HepG2 (cell line): ENCODE measurements at regions of chr11 and their contacts with region 1.

Region 1: GRCh38 chr11:66438504-66439466 is at the start of gene MRPL11:
- DNase-seq: peak; percentile 92
- ATAC-seq: peak; percentile 94
- H3K4me3 ChIP-seq: peak within 1 kb of the TSS; percentile 78 to 89 (median 84)
- H3K27ac ChIP-seq: peak within 1 kb of the TSS; percentile 88
- H3K4me1 ChIP-seq: peaks cover 33% of the 10 kb centered on the region
- H3K27me3 ChIP-seq: peaks cover 2 to 9% of the 10 kb centered on the region in 2 experiments; a peak in 2 of 5 replicates
- CTCF ChIP-seq: peak; percentile 90
- EP300 ChIP-seq: no peak
- POLR2A ChIP-seq: peak; percentile 67 to 78; a peak in 3 of 4 replicates
- RAD21 ChIP-seq: no peak
- total RNA-seq, gene MRPL11: 176 and 220 TPM in 2 replicates

Region 2: GRCh38 chr11:66421492-66422205 is 17.1 kb before region 1 on chr11:
- CTCF ChIA-PET with region 1: no interaction called
- POLR2A ChIA-PET with region 1: interaction called, 11 read pairs
- in situ Hi-C with region 1: no loop called
- intact Hi-C with region 1: no loop called
- DNase-seq: peak; percentile 78
- ATAC-seq: peak; percentile 73
- H3K4me3 ChIP-seq: no peak overlapping the region
- H3K27ac ChIP-seq: no peak overlapping the region
- H3K4me1 ChIP-seq: no peaks in the 10 kb centered on the region
- H3K27me3 ChIP-seq: peaks cover 0 to 5% of the 10 kb centered on the region in 2 experiments; a peak in 1 of 5 replicates
- CTCF ChIP-seq: peak; percentile 58
- EP300 ChIP-seq: peak; percentile 48 to 58; a peak in 3 of 4 replicates
- POLR2A ChIP-seq: no peak
- RAD21 ChIP-seq: peak; percentile 96

Region 3: DNA sequence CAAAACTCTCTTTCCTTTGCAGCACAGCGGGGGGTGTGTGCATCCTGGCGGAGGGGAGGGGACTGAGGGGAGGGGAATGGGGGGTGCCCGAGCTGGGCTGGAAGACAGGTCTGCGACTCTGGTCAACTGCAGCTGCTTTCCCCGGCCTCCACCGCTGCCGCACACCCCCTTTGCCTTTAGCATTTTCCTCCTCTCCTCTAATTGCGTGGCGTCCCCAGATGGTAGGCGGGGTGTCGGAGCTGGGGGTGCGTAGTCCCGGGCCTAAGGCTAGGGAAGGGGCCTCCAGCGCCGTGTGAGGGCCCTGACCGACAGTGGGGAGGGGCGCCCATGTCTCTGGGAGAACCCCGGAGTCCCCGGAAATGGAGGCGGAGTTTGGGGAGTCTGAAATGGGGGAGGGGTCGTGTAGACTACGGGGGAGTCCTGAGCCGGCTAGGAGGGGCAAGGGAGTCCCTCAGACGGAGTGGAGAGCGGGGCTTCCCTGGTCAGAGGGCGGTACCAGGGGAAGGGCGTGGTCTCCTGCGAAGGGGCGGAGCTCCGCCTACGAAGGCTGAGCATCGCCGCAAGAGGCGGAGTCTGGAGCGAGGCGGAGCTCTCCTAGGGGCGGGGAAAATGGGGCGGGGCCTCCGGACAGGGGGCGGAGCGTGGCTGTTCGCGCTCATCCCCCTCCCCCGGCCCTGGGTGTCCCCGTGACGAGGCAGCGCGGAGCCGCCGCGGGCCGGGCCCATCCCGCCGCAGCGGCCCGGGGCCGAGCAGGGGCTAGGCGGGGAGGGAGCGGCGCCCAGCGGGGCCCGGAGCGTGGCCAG is 27.6 kb after region 1 on chr11 and contains the start of gene PELI3:
- CTCF ChIA-PET with region 1: no interaction called
- POLR2A ChIA-PET with region 1: interaction called, 41 read pairs
- in situ Hi-C with region 1: no loop called
- intact Hi-C with region 1: no loop called
- DNase-seq: peak; percentile 72
- ATAC-seq: peak; percentile 86
- H3K4me3 ChIP-seq: peak within 1 kb of the TSS; percentile 77 to 87 (median 84)
- H3K27ac ChIP-seq: no peak within 1 kb of the TSS
- H3K4me1 ChIP-seq: peaks cover 26% of the 10 kb centered on the region
- H3K27me3 ChIP-seq: peaks cover 0 to 12% of the 10 kb centered on the region in 2 experiments; a peak in 3 of 5 replicates
- CTCF ChIP-seq: no peak
- EP300 ChIP-seq: no peak
- POLR2A ChIP-seq: peak in 1 of 2 experiments; percentile 56; a peak in 2 of 4 replicates
- RAD21 ChIP-seq: no peak
- total RNA-seq, gene PELI3: 2.5 and 4.0 TPM in 2 replicates